ENCODE measurements at regions of chr11 and their contacts with region 1.

Region 1: DNA sequence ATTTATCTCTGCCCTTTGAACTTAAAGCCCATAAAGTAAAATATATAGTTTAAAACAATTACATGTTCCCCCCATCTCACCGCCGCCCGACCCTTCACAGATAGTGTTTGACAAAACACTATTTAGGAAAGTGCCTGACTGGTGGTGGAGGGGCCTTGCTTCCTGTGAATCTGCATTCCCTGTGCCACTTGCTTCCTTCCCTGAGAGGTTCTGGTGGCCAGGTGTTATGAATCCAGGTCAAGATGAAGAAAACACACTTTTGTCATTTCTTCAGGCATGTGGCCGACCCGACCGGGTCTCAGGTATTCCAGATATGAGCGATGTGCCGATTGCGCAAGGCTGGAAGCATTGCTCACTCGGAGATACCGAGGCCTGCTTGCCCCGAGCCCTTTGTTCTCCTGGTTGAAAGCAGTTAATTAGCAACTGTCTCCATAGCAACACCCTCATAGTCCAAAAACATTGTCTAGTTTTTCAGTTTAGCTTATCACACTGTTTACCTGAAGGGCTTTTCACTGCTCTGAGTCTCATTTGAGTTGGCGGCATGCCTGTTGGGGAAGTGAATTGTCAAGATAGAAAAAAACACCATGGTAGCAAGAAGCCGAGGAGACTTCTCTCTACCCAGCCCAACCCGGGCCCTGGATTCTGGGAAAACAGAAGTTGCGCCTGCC is 128.3 kb downstream of the TEAD1 start:
- DNase-seq: peak; percentile 98

Region 2: GRCh38 chr11:11125618-11126017 is 1676.9 kb before region 1 on chr11:
- in situ Hi-C with region 1: no loop called
- DNase-seq: no peak

Region 3: DNA sequence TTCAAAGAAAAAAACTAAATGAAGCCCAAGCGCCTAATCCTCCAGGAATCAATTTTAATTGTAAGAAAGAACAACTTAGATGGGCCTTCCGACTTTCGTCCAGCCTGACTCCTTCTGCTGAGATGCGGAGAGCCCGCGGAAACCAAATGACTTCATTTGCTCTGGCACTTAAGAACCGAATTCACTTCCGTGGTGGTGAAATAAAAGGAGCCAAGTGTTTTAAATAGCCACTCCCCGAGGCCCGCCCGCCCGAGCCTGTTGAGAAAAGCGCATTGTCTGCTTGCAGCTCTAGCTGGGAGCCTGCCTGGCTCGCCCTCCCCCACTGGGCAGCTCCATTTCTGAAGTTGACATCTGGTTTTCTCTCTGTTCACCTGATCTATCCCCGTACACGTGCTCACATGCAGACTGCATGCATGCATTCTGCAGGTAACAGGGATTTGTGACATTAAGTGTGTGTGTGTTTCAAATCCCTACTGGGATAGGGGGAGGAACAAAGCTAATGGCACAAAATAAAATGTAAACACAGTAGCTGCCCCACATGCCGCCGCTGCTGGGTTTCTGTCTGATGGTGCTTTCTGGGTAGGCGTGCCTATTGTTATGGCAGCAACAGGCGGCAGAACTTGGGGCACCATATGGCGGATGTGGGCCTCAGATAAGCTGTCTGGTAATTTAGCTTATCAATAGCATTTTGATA is 122.2 kb before region 1 on chr11:
- in situ Hi-C with region 1: loop called (anchors 25 kb)
- DNase-seq: peak; percentile 76

Measured in Caki2 (cell line).